Ascending aorta (tissue), 2 donors: ENCODE measurements at regions of chr2 and their contacts with region 1.

Region 1: GRCh38 chr2:217186668-217187159 is 326.9 kb upstream of the TNP1 start:
- DNase-seq: peak in 1 of 2 donors; percentile 69
- H3K4me3 ChIP-seq: no peak overlapping the region
- H3K27ac ChIP-seq: peak overlapping the region; percentile 76 to 80
- H3K4me1 ChIP-seq: peaks cover 11 to 45% of the 10 kb centered on the region in 2 donors
- H3K27me3 ChIP-seq: no peaks in the 10 kb centered on the region
- CTCF ChIP-seq: no peak

Region 2: GRCh38 chr2:217204358-217204757 is 17.6 kb after region 1 on chr2:
- intact Hi-C with region 1: no loop called
- DNase-seq: no peak
- H3K4me3 ChIP-seq: no peak overlapping the region
- H3K27ac ChIP-seq: no peak overlapping the region
- H3K4me1 ChIP-seq: no peaks in the 10 kb centered on the region
- H3K27me3 ChIP-seq: no peaks in the 10 kb centered on the region
- CTCF ChIP-seq: no peak

Region 3: GRCh38 chr2:217223222-217223930 is 36.7 kb after region 1 on chr2:
- intact Hi-C with region 1: loop called (anchors 2 kb)
- DNase-seq: peak; percentile 35 to 88
- H3K4me3 ChIP-seq: no peak overlapping the region
- H3K27ac ChIP-seq: peak overlapping the region; percentile 66 to 70
- H3K4me1 ChIP-seq: peaks cover 3 to 32% of the 10 kb centered on the region in 2 donors
- H3K27me3 ChIP-seq: no peaks in the 10 kb centered on the region
- CTCF ChIP-seq: no peak